ENCODE measurements at regions of chr3 and their contacts with region 1.

Region 1: GRCh38 chr3:73419179-73419803 is 205.4 kb downstream of the PDZRN3 start:
- DNase-seq: peak; percentile 54
- H3K4me3 ChIP-seq: peak overlapping the region; percentile 1
- H3K27me3 ChIP-seq: no peaks in the 10 kb centered on the region
- CTCF ChIP-seq: peak; percentile 46

Region 2: GRCh38 chr3:73405853-73406252 is 13.4 kb before region 1 on chr3:
- CTCF ChIA-PET with region 1: interaction called, 14 read pairs
- POLR2A ChIA-PET with region 1: no interaction called
- DNase-seq: peak; percentile 54
- H3K4me3 ChIP-seq: no peak overlapping the region
- H3K27me3 ChIP-seq: no peaks in the 10 kb centered on the region
- CTCF ChIP-seq: no peak

Region 3: DNA sequence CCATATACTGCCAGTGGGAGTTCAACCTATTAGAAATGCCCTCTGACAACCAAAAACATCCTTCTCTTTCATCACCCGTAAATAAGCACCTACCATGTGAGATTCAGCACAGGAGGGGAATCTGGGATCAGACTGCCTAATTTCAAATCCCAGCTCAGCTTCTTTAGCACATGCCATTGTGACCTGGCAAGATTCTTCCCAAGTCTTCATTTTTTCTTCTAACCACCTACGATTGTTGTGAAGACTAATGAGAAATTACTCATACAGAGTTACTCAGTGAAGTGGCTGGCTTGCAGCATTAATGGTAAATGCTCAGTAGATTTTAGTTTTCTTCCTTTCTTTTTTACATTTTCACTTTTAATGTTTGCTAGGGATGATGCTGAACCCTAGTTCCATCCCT is 28.8 kb after region 1 on chr3:
- CTCF ChIA-PET with region 1: no interaction called
- POLR2A ChIA-PET with region 1: no interaction called
- DNase-seq: no peak
- H3K4me3 ChIP-seq: no peak overlapping the region
- H3K27me3 ChIP-seq: no peaks in the 10 kb centered on the region
- CTCF ChIP-seq: no peak

Measured in BJ (cell line).